Endothelial cell of umbilical vein (primary cell): ENCODE measurements at regions of chr17 and their contacts with region 1.

Region 1: GRCh38 chr17:15914400-15915170 is 30.3 kb upstream of the ADORA2B start:
- DNase-seq: no peak
- H3K4me3 ChIP-seq: no peak overlapping the region
- H3K27ac ChIP-seq: peak overlapping the region; percentile 72
- H3K4me1 ChIP-seq: peaks cover 13% of the 10 kb centered on the region
- H3K27me3 ChIP-seq: peaks cover 0 to 6% of the 10 kb centered on the region in 2 experiments
- CTCF ChIP-seq: no peak
- POLR2A ChIP-seq: no peak

Region 2: DNA sequence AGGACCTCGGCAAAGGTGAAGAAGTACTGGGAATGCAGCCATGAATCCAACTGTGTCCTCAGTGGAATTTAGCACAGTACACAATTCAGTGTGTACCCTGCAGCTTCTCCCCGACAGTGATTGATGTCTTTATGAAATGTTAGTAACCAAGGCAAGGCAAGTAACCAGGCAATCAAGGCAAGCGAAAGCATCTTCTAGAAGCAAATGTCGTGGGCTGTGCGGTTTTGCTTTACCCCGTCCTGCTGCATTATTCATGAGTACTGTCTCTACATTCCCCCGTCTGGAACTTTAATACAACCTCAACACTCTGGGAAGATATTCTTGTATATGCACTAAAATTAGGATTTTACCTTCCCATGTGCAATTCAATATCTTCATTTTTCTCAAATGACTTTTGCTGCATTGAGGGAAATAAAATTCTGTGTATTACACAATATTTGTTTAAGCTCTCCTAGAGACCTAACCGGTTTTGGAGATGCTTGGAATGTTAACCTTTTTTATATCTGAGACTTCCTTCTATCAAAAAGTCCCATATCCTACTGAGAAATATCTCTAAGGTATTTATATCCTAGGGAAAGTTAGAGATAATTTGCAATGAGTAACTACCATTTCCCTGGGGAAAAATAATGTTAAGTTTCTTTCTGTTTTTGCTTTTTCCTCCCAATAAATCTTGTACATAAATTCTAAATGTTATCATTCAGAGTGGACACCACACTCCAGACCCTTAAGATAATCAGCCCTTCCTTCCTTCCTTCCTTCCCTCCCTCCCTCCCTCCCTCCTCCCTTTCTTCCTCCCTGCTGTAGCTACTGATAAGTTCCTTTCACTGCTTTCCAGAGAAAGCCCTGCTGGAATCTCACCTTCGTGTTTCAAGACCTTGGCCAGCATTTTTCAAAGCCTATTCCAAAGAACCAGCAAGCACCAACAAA is 21.6 kb before region 1 on chr17:
- CTCF ChIA-PET with region 1: no interaction called
- POLR2A ChIA-PET with region 1: no interaction called
- dilution Hi-C with region 1: no loop called
- intact Hi-C with region 1: no loop called
- DNase-seq: peak; percentile 58
- H3K4me3 ChIP-seq: no peak overlapping the region
- H3K27ac ChIP-seq: no peak overlapping the region
- H3K4me1 ChIP-seq: peaks cover 11% of the 10 kb centered on the region
- H3K27me3 ChIP-seq: no peaks in the 10 kb centered on the region
- CTCF ChIP-seq: no peak
- POLR2A ChIP-seq: no peak

Region 3: GRCh38 chr17:15928348-15928740 is 13.8 kb after region 1 on chr17:
- CTCF ChIA-PET with region 1: no interaction called
- POLR2A ChIA-PET with region 1: no interaction called
- dilution Hi-C with region 1: no loop called
- intact Hi-C with region 1: loop called (anchors 2 kb)
- DNase-seq: no peak
- H3K4me3 ChIP-seq: no peak overlapping the region
- H3K27ac ChIP-seq: no peak overlapping the region
- H3K4me1 ChIP-seq: no peaks in the 10 kb centered on the region
- H3K27me3 ChIP-seq: peaks cover 0 to 2% of the 10 kb centered on the region in 2 experiments
- CTCF ChIP-seq: no peak
- POLR2A ChIP-seq: no peak

Region 4: DNA sequence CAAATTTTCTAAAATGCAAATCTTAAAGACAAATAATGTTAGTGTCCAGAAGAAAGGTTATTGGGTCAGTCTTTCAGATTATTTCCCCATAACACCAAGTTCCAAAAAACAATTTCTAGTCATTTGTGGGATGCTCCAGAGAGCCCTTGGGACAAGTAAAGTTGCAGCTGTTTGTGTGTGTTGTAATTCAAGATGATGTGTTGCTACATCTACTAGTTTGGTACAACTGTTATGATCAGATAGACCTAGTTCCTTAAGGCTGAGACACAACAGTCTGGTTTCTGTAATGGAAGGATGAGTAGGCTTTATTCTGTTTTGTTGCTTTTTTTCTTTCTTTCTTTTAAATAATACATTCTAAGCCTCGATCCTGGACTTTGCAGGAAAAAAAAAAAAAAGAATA is 344.3 kb after region 1 on chr17:
- CTCF ChIA-PET with region 1: no interaction called
- POLR2A ChIA-PET with region 1: no interaction called
- dilution Hi-C with region 1: no loop called
- intact Hi-C with region 1: no loop called
- DNase-seq: no peak
- H3K4me3 ChIP-seq: no peak overlapping the region
- H3K27ac ChIP-seq: no peak overlapping the region
- H3K4me1 ChIP-seq: peaks cover 5% of the 10 kb centered on the region
- H3K27me3 ChIP-seq: no peaks in the 10 kb centered on the region
- CTCF ChIP-seq: no peak
- POLR2A ChIP-seq: no peak